ENCODE measurements at regions of chr4 and their contacts with region 1.

Region 1: DNA sequence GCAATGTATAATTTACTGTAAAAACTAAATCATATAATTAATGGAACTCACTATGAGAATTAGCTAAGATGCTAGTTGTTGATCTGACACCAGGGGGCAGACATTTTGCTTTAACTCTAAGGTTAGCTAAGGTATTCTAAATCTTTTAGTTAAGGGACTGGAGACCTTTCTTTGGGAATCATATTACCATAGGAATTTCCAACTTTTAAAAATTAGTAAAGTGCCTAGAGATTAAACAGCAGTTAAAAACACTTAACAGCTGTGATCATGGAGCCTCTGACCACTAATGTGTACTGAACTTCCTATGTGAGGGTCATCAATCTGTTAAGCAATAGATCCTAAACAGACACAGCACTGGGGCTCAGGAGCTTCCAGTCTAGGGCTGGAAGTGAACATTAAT is 226.6 kb downstream of the NSUN7 start:
- DNase-seq: no peak
- H3K4me3 ChIP-seq: no peak overlapping the region
- CTCF ChIP-seq: peak; percentile 55

Region 2: DNA sequence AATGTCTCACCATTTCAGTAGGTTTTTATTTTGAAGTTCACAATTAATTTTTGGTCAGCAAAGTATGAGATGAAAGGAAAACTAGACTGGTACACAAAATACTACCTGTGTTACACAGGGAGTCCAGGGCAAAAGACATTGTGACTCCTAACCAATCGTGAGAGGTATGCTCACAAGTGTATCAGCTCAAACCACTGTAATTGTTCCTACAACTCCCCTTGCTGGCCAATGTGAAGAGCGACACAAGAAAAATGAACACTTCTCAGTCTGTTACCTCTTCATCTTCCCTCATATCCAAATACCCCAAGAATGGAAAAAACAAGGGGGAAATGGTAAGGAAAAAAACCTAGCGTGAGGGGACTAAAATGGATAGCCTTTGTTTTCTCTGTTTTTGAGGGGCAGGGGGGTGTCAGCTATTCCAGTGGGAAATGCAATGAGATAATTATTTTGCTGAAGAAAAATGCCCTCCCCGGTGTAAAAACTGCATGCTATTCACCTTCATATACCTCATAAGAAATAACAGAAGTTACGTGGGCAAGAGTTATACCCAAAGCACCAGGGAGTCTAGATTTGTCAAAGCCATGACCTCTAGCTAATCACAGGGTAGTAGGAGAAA is 257.2 kb before region 1 on chr4:
- CTCF ChIA-PET with region 1: no interaction called
- POLR2A ChIA-PET with region 1: no interaction called
- DNase-seq: no peak
- H3K4me3 ChIP-seq: no peak overlapping the region
- CTCF ChIP-seq: peak; percentile 58

Region 3: GRCh38 chr4:40953283-40954087 is 22.9 kb before region 1 on chr4:
- CTCF ChIA-PET with region 1: interaction called, 12 read pairs
- POLR2A ChIA-PET with region 1: interaction called, 3 read pairs
- DNase-seq: no peak
- H3K4me3 ChIP-seq: no peak overlapping the region
- CTCF ChIP-seq: no peak

Region 4: DNA sequence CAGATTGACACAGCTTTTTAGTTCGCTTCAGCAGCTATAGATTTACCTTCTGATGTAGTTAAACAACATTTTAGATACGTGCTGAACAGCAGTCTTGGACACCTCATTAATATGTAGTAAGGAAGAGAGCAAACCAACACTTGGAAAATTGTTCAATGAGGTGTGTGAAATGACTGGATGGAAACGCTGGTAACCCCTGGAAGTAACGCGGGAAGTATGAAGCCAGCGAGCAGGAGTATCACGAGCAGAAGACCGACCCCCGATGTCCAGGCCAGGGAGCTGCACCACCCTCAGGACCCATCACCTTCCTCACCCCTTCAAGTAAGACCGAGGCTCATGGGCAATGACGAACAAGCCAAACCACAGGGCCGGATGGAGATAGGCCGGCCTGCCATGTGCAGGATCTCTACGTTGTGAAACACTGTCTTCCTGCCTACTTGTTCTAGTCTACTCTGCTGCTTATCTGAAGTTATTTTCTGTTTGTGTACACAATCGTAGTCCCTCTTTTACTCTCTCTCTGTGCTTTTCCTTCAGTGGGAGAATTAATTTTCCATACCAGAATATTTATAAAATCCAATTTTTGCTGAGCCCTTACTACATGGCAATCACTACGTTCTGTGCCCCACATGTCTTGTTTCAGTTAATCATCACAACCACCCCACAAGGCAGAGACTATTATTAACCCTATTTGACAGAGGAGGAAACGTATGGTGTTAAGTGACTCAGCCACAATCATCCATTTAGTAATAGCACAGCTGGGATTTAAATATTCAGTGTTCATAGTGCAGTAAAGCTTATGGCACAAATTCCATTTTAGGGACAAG is 16.3 kb after region 1 on chr4:
- CTCF ChIA-PET with region 1: interaction called, 39 read pairs
- POLR2A ChIA-PET with region 1: interaction called, 6 read pairs
- DNase-seq: no peak
- H3K4me3 ChIP-seq: no peak overlapping the region
- CTCF ChIP-seq: no peak

Region 5: DNA sequence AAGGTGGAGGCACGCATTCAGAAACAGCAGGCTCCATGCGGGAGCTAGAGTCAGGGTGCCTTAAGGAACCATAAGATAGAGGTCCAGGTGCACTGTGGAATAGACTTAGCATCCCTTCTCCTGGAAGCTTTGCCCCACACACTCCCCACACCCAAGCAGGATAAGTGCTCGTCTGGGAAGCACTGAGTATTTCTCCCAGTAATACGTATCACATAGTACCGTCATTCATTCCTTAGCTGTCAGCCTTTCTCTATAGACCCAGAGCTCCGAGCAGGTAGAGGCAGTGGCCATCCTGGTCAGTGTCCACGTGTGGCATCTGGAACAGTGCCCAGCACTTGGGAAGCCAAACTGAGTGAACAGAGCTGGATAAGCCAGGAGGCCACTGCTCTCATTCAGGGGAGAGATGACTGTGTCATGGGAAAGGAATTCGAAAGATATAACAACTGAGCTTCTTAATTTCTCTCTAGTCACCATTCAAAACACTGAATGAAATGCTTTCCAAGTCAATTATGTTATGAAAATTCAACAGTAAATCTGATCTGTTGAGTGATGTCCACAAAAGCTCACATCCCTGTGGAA is 228.1 kb after region 1 on chr4:
- CTCF ChIA-PET with region 1: interaction called, 205 read pairs
- POLR2A ChIA-PET with region 1: no interaction called
- DNase-seq: no peak
- H3K4me3 ChIP-seq: no peak overlapping the region
- CTCF ChIP-seq: no peak

Measured in AG04449 (cell line).